HepG2 (cell line): ENCODE measurements at regions of chr2 and their contacts with region 1.

Region 1: DNA sequence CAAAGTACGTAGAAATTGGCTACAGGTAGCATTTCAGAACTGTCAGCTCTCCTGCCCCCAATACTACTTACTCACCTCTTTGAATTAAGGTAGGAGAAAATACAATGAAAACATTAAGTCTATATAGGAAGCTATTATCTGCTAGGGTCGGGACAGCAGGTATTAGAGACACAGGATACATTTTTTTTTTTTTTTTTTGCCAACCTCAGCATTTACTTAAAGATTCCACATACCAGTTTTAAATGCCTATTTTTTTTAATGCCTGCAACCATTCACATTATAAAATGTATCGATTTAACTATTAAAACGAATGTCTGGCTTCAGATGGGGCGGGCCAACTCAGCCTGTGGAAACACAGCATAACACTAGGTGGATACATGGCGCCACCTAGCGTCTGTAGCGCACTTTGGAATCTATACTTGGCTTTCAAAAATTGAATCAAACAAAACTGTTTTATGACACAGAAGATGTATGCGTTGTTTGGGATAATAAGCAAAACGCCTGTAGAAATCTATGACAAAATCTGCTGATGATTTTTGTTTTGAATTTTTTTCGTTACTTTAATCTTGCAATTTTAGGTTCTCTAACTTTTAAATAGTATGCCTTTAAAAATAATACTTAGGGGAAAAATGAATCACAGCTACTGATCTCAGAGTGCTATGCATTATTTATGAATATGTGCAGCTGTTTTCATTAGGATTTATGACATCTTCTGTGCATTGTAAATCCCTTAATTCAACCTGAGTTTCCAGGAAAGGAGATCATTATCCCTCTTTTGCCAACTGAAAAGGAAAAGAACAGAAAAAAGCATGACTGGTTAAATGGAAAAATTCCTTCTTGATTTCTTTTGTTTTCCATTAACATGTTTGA is 261.0 kb downstream of the NYAP2 start:
- DNase-seq: peak; percentile 53
- ATAC-seq: peak; percentile 90
- H3K4me3 ChIP-seq: no peak overlapping the region
- H3K27ac ChIP-seq: no peak overlapping the region
- H3K4me1 ChIP-seq: no peaks in the 10 kb centered on the region
- H3K27me3 ChIP-seq: no peaks in the 10 kb centered on the region
- CTCF ChIP-seq: peak; percentile 89
- EP300 ChIP-seq: no peak
- POLR2A ChIP-seq: no peak
- RAD21 ChIP-seq: peak; percentile 82

Region 2: GRCh38 chr2:224357098-224357901 is 1303.2 kb before region 1 on chr2:
- CTCF ChIA-PET with region 1: interaction called, 3 read pairs
- POLR2A ChIA-PET with region 1: no interaction called
- in situ Hi-C with region 1: loop called (anchors 25 kb)
- intact Hi-C with region 1: no loop called
- DNase-seq: peak; percentile 58
- ATAC-seq: peak; percentile 86
- H3K4me3 ChIP-seq: no peak overlapping the region
- H3K27ac ChIP-seq: no peak overlapping the region
- H3K4me1 ChIP-seq: no peaks in the 10 kb centered on the region
- H3K27me3 ChIP-seq: peaks cover 0 to 10% of the 10 kb centered on the region in 2 experiments; a peak in 2 of 5 replicates
- CTCF ChIP-seq: peak; percentile 90
- EP300 ChIP-seq: no peak
- POLR2A ChIP-seq: no peak
- RAD21 ChIP-seq: peak; percentile 65

Region 3: DNA sequence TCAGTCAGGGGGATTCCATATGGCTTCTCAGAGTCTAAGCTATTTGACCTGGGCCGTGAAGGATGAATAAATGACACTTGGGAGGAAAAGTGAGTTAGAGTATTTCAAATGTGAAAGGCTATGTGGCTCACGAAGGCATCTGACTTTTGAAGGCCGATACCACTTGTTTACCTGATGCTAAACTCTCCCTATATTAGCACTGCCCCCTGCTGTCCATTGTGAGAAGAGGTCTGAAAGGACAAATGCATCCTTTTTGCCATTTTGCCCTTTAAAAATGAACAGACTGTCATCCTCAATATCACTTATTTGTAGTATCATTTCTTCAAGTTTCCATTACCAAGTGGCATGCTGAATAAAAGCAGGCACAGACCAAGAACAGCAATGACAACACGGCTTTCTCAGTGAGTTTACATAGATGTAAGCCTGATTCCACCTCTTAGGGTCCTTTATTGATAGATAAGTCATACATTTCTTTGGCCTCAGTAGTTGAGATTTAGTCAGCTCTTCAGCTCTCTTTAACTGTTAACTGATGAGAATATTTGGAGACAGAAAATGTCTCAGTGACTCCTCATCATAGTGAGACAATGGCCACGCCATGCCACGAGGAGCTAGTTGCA is 658.4 kb before region 1 on chr2:
- CTCF ChIA-PET with region 1: interaction called, 3 read pairs
- POLR2A ChIA-PET with region 1: no interaction called
- in situ Hi-C with region 1: no loop called
- intact Hi-C with region 1: loop called (anchors 2 kb)
- DNase-seq: peak; percentile 54
- ATAC-seq: peak; percentile 83
- H3K4me3 ChIP-seq: no peak overlapping the region
- H3K27ac ChIP-seq: no peak overlapping the region
- H3K4me1 ChIP-seq: no peaks in the 10 kb centered on the region
- H3K27me3 ChIP-seq: no peaks in the 10 kb centered on the region
- CTCF ChIP-seq: peak; percentile 71
- EP300 ChIP-seq: no peak
- POLR2A ChIP-seq: no peak
- RAD21 ChIP-seq: no peak

Region 4: DNA sequence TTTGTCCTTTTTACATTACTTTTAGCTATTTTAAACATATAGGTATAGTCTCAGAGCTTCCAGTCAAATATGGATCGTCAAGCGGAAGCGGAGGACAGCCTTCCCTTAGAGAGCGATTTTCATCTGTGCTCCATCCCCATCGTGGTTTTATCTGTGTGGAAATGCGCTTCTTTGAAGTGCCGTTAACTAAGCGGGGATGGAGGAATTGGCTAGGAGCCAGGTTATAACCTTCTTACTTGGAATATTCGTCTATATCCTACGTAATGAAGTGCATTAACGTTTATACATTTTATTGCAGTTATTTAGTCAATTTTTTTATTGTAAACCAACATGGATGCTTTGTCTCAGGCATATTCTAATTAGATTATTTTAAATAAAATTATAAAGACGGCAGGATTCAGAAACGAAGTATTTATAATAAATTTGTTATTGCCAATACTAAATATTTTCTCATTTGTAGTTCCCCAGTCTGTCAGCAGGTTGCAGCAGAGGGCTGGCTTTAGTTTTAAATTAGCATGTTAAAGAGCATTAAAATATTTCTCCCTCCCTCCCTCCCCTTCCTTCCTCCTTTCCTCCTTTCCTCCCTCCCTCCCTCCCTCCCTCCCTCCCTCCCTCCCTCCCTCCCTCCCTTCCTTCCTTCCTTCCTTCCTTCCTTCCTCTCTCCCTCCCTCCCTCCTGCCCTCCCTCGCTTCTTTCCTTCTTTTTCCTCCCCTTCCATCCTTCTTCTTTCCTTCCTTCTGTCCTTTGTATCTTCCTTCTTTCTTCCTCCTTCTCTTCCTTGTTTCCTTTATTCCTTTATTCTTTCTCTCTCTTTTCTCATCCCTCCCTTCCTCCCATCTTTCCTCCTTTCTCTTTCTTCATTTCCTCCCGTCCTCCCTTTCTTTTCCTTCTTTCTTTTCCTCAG is 537.7 kb before region 1 on chr2:
- CTCF ChIA-PET with region 1: interaction called, 18 read pairs
- POLR2A ChIA-PET with region 1: no interaction called
- in situ Hi-C with region 1: loop called (anchors 5 kb)
- intact Hi-C with region 1: loop called (anchors 1 kb)
- DNase-seq: no peak
- ATAC-seq: no peak
- H3K4me3 ChIP-seq: no peak overlapping the region
- H3K27ac ChIP-seq: no peak overlapping the region
- H3K4me1 ChIP-seq: no peaks in the 10 kb centered on the region
- H3K27me3 ChIP-seq: no peaks in the 10 kb centered on the region; a peak in 1 of 5 replicates
- CTCF ChIP-seq: 0 out of 2 replicates have a peak, but pooled peaks have one; percentile 18
- EP300 ChIP-seq: no peak
- POLR2A ChIP-seq: no peak
- RAD21 ChIP-seq: no peak

Region 5: DNA sequence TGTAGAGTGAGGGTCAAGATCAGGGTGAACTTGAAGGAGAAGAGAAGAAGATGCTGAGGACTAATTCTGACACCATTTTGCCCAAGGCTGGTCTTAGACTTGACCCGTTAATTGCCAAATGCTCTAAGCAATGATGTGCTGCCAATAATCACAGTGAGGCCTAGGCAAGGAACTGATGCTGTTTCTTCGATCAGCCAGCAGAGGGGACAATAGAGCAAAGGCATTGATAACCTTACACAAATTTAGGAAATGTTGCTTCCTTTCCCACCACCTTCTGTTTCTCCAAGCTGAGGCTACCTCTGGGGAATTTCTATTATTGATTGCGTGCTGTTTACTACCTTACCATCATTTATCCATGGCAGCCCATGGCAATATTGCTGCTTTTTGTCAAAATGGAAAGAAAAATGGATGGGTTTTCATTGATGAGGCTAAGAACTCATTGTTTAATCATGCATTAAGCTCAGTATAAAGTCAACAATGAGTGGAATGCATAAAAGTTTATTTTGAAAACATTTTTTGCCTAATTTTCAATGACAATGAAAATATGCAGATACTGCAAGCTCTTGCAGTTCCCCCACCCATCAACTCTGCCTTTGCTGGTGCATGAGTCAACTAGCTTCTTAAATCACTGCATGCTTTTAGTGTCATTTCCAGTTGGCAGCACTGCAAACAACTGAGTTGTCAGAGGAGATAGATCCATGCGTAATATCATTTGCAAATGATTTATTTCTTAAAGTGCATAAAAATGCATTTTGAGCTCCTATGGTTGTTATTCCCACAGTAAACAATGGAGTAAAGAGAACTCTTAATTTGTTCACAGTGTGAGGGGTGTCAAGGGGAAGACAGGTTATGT is 377.4 kb before region 1 on chr2:
- CTCF ChIA-PET with region 1: interaction called, 52 read pairs
- POLR2A ChIA-PET with region 1: no interaction called
- in situ Hi-C with region 1: loop called (anchors 5 kb)
- intact Hi-C with region 1: no loop called
- DNase-seq: peak; percentile 16
- ATAC-seq: peak; percentile 75
- H3K4me3 ChIP-seq: no peak overlapping the region
- H3K27ac ChIP-seq: no peak overlapping the region
- H3K4me1 ChIP-seq: no peaks in the 10 kb centered on the region
- H3K27me3 ChIP-seq: no peaks in the 10 kb centered on the region
- CTCF ChIP-seq: peak; percentile 64
- EP300 ChIP-seq: no peak
- POLR2A ChIP-seq: no peak
- RAD21 ChIP-seq: peak; percentile 11; the same call in 1 of the 2 replicates

Region 6: GRCh38 chr2:225637259-225637658 is 23.2 kb before region 1 on chr2:
- CTCF ChIA-PET with region 1: no interaction called
- POLR2A ChIA-PET with region 1: no interaction called
- in situ Hi-C with region 1: no loop called
- intact Hi-C with region 1: no loop called
- DNase-seq: no peak
- ATAC-seq: no peak
- H3K4me3 ChIP-seq: no peak overlapping the region
- H3K27ac ChIP-seq: no peak overlapping the region
- H3K4me1 ChIP-seq: no peaks in the 10 kb centered on the region
- H3K27me3 ChIP-seq: no peaks in the 10 kb centered on the region
- CTCF ChIP-seq: no peak
- EP300 ChIP-seq: no peak
- POLR2A ChIP-seq: no peak
- RAD21 ChIP-seq: no peak

Region 7: GRCh38 chr2:226215902-226216503 is 555.5 kb after region 1 on chr2:
- CTCF ChIA-PET with region 1: no interaction called
- POLR2A ChIA-PET with region 1: no interaction called
- in situ Hi-C with region 1: no loop called
- intact Hi-C with region 1: loop called (anchors 10 kb)
- DNase-seq: peak; percentile 63
- ATAC-seq: peak; percentile 99
- H3K4me3 ChIP-seq: no peak overlapping the region
- H3K27ac ChIP-seq: no peak overlapping the region
- H3K4me1 ChIP-seq: 0 out of 2 replicates have a peak, but pooled peaks cover 5% of the 10 kb centered on the region
- H3K27me3 ChIP-seq: no peaks in the 10 kb centered on the region
- CTCF ChIP-seq: peak; percentile 89
- EP300 ChIP-seq: peak in 1 of 2 experiments; percentile 45; a peak in 1 of 4 replicates
- POLR2A ChIP-seq: no peak
- RAD21 ChIP-seq: peak; percentile 78